Astrocyte of the cerebellum (primary cell): ENCODE measurements at regions of chr10 and their contacts with region 1.

Region 1: GRCh38 chr10:132520177-132520811 is 17.3 kb upstream of the INPP5A start:
- DNase-seq: peak; percentile 68
- H3K4me3 ChIP-seq: no peak overlapping the region
- CTCF ChIP-seq: no peak

Region 2: GRCh38 chr10:132463333-132464252 is 56.7 kb before region 1 on chr10:
- in situ Hi-C with region 1: loop called (anchors 5 kb)
- DNase-seq: no peak
- H3K4me3 ChIP-seq: no peak overlapping the region
- CTCF ChIP-seq: peak; percentile 27

Region 3: DNA sequence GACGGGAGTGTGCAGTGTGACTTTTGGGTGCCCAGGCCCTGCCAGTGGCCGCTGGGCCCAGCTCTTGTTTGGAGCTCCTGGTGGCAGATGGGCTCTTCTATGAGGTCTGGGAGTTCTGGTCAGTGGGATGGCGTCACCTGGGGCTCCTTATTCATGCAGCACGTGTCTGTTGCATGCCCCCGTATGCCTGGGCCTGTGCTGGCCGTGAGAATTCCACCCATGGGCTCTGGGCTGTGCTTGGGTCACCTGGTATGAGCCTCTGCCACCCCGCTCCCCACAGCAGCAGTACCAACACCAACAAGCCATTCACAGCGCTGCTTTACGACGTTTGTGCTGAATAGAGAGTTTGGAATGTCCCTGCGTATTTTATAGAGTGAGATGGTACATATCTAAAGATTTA is 44.4 kb after region 1 on chr10:
- in situ Hi-C with region 1: loop called (anchors 5 kb)
- DNase-seq: no peak
- H3K4me3 ChIP-seq: no peak overlapping the region
- CTCF ChIP-seq: no peak